ENCODE measurements at regions of chr20 and their contacts with region 1.

Region 1: DNA sequence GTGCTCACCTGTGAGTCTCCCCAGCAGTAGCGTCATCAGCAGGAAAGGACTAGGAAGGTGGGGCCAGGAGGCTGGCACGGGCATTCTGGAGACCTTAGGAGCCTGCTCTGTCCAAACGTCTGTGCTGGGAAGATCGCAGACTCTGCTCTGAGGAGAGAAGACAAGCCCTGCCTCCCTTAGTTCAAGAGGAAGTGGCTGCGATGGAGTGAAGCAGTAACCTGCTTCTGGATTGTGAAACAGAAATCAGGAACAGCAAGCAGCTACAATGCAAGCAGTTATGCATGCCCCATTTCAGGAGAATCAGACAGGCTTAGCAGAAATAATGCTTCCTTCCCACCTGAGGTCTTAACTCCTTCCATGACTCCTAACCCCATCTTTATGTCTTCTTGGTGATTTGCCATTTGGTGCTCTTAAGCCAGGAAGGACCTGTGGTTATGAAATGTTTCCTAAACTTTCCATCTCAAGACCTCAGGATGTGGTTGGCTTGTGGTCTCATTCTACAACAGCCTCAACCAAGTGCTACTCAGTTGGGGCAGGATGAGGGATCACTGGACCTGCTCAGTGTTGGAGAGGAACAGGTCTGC is at the start of gene SIRPB1:
- DNase-seq: no peak
- ATAC-seq: peak; percentile 61
- H3K4me3 ChIP-seq: peak within 1 kb of the TSS; percentile 20; the same call in 1 of the 2 replicates
- H3K27ac ChIP-seq: no peak within 1 kb of the TSS; the same call in 1 of the 2 replicates
- H3K4me1 ChIP-seq: peaks cover 28% of the 10 kb centered on the region
- H3K27me3 ChIP-seq: no peaks in the 10 kb centered on the region
- CTCF ChIP-seq: no peak
- EP300 ChIP-seq: no peak
- POLR2A ChIP-seq: no peak
- RAD21 ChIP-seq: no peak
- polyA plus RNA-seq, gene SIRPB1: 27.9 to 33.8 TPM

Region 2: DNA sequence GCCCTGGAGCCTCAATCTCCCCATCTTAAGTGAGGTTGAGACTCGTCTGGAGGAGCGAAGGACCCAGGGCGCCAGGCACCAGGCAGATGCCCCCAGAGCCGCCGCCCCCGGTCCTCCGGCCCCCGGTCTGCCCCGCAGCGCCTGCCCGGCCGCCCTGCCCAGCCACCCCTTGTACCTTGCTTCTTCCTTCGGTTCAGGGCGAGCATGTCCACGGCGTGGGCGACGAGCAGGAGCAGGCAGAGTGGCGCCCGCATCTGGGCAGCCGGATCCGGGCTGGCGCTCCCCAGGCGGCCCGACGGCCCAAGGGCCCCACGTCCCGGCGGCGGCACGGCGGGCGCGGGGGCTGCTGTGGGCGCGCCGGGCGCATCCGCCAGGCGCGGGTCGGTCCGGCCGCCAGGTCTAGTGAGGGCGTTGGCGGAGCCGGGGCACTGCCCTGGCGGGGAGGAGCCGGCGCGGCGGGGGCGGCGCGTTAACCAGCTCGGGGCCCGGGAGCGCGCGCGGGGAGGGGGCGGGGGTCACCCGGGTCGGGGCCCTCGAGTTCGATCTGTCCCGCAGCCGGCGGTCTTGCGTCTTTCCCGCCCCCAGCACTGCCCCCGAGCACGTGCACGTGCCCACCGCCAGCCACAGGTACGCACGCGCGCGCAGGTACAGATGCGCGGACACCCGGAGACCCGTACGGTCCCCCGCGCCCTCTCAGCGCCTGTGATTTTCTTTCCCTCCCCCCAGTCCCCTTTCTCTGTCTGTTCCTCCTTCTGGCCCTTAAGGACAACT is 617.9 kb before region 1 on chr20 and contains the start of gene RSPO4:
- CTCF ChIA-PET with region 1: no interaction called
- POLR2A ChIA-PET with region 1: no interaction called
- RAD21 ChIA-PET with region 1: no interaction called
- SMC1A ChIA-PET with region 1: no interaction called
- in situ Hi-C with region 1: no loop called
- intact Hi-C with region 1: no loop called
- DNase-seq: no peak
- ATAC-seq: no peak
- H3K4me3 ChIP-seq: no peak within 1 kb of the TSS
- H3K27ac ChIP-seq: no peak within 1 kb of the TSS
- H3K4me1 ChIP-seq: no peaks in the 10 kb centered on the region
- H3K27me3 ChIP-seq: peaks cover 8 to 18% of the 10 kb centered on the region in 2 experiments
- CTCF ChIP-seq: no peak
- EP300 ChIP-seq: no peak
- POLR2A ChIP-seq: no peak
- RAD21 ChIP-seq: no peak
- polyA plus RNA-seq, gene RSPO4: not detected

Region 3: GRCh38 chr20:1535420-1536175 is 84.4 kb before region 1 on chr20:
- CTCF ChIA-PET with region 1: interaction called, 6 read pairs
- POLR2A ChIA-PET with region 1: no interaction called
- RAD21 ChIA-PET with region 1: interaction called, 4 read pairs
- SMC1A ChIA-PET with region 1: interaction called, 5 read pairs
- in situ Hi-C with region 1: no loop called
- intact Hi-C with region 1: loop called (anchors 1 kb)
- DNase-seq: peak; percentile 96
- ATAC-seq: peak; percentile 87
- H3K4me3 ChIP-seq: no peak overlapping the region
- H3K27ac ChIP-seq: peak overlapping the region; percentile 40
- H3K4me1 ChIP-seq: peaks cover 38% of the 10 kb centered on the region
- H3K27me3 ChIP-seq: peaks cover 0 to 1% of the 10 kb centered on the region in 2 experiments; a peak in 1 of 4 replicates
- CTCF ChIP-seq: no peak
- EP300 ChIP-seq: peak in 1 of 2 experiments; percentile 86; a peak in 2 of 4 replicates
- POLR2A ChIP-seq: no peak
- RAD21 ChIP-seq: no peak

Region 4: DNA sequence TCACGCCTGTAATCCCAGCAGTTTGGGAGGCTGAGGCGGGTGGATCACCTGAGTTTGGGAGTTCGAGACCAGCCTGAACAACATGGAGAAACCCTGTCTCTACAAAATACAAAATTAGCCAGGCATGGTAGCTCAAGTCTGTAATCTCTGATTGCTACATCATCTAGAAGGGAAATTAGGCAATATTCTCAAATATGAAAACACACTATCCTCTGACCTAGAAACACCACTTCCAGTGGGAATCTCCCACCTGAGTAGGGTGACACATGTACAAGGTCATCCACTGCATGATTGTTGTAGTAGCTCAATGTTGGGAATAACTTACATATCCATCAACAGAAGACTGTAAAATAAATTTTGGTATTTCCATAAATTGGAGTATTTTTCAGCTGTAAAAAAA is 43.3 kb before region 1 on chr20:
- CTCF ChIA-PET with region 1: no interaction called
- POLR2A ChIA-PET with region 1: no interaction called
- RAD21 ChIA-PET with region 1: no interaction called
- SMC1A ChIA-PET with region 1: interaction called, 5 read pairs
- in situ Hi-C with region 1: loop called (anchors 5 kb)
- intact Hi-C with region 1: no loop called
- DNase-seq: no peak
- ATAC-seq: no peak
- H3K4me3 ChIP-seq: no peak overlapping the region
- H3K27ac ChIP-seq: no peak overlapping the region
- H3K4me1 ChIP-seq: no peaks in the 10 kb centered on the region
- H3K27me3 ChIP-seq: no peaks in the 10 kb centered on the region
- CTCF ChIP-seq: no peak
- EP300 ChIP-seq: no peak
- POLR2A ChIP-seq: no peak
- RAD21 ChIP-seq: no peak

Region 5: DNA sequence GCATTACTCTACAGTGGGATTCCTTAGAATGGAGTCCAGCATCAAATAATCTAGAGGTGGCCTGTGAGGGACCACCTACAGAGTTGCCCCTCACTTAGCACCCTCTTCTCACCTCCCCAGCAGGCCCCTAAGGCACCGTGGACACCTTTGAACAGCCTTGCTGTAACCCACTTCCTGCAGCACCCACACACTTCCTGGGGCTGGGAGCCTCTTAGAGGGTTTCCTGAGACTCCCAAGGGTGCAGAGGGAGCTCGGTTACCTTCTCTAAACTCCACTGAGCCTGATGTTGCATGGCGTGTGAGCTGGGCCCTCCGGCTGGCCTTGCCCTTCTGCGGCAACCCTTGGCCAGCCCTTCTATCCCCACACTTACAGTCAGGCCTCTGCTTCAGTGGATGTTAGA is 45.0 kb after region 1 on chr20:
- CTCF ChIA-PET with region 1: no interaction called
- POLR2A ChIA-PET with region 1: interaction called, 3 read pairs
- RAD21 ChIA-PET with region 1: no interaction called
- SMC1A ChIA-PET with region 1: interaction called, 11 read pairs
- in situ Hi-C with region 1: no loop called
- intact Hi-C with region 1: no loop called
- DNase-seq: peak; percentile 19
- ATAC-seq: peak; percentile 65
- H3K4me3 ChIP-seq: no peak overlapping the region
- H3K27ac ChIP-seq: no peak overlapping the region
- H3K4me1 ChIP-seq: peaks cover 26% of the 10 kb centered on the region
- H3K27me3 ChIP-seq: no peaks in the 10 kb centered on the region
- CTCF ChIP-seq: no peak
- EP300 ChIP-seq: 0 out of 4 replicates have a peak, but pooled peaks of 1 of the 2 experiments have one; percentile 42
- POLR2A ChIP-seq: no peak
- RAD21 ChIP-seq: no peak; the same call in 1 of the 2 replicates

Region 6: GRCh38 chr20:1764136-1765033 is 144.4 kb after region 1 on chr20:
- CTCF ChIA-PET with region 1: no interaction called
- POLR2A ChIA-PET with region 1: no interaction called
- RAD21 ChIA-PET with region 1: no interaction called
- SMC1A ChIA-PET with region 1: no interaction called
- in situ Hi-C with region 1: no loop called
- intact Hi-C with region 1: no loop called
- DNase-seq: peak; percentile 57
- ATAC-seq: peak; percentile 100
- H3K4me3 ChIP-seq: no peak overlapping the region
- H3K27ac ChIP-seq: no peak overlapping the region
- H3K4me1 ChIP-seq: peaks cover 4% of the 10 kb centered on the region
- H3K27me3 ChIP-seq: peaks cover 0 to 2% of the 10 kb centered on the region in 2 experiments; a peak in 2 of 4 replicates
- CTCF ChIP-seq: peak; percentile 80 to 89 (median 81)
- EP300 ChIP-seq: no peak
- POLR2A ChIP-seq: no peak
- RAD21 ChIP-seq: peak; percentile 79

Region 7: GRCh38 chr20:1965520-1966351 is 345.8 kb after region 1 on chr20:
- CTCF ChIA-PET with region 1: no interaction called
- POLR2A ChIA-PET with region 1: no interaction called
- RAD21 ChIA-PET with region 1: no interaction called
- SMC1A ChIA-PET with region 1: no interaction called
- in situ Hi-C with region 1: no loop called
- intact Hi-C with region 1: no loop called
- DNase-seq: peak; percentile 19
- ATAC-seq: peak; percentile 97
- H3K4me3 ChIP-seq: no peak overlapping the region
- H3K27ac ChIP-seq: no peak overlapping the region
- H3K4me1 ChIP-seq: no peaks in the 10 kb centered on the region; the same call in 1 of the 2 replicates
- H3K27me3 ChIP-seq: peaks cover 0 to 3% of the 10 kb centered on the region in 2 experiments; a peak in 3 of 4 replicates
- CTCF ChIP-seq: peak; percentile 92 to 95 (median 92)
- EP300 ChIP-seq: no peak
- POLR2A ChIP-seq: no peak
- RAD21 ChIP-seq: peak; percentile 84

Measured in GM12878 (cell line).